OCI-LY7 (cell line): ENCODE measurements at regions of chr19 and their contacts with region 1.

Region 1: DNA sequence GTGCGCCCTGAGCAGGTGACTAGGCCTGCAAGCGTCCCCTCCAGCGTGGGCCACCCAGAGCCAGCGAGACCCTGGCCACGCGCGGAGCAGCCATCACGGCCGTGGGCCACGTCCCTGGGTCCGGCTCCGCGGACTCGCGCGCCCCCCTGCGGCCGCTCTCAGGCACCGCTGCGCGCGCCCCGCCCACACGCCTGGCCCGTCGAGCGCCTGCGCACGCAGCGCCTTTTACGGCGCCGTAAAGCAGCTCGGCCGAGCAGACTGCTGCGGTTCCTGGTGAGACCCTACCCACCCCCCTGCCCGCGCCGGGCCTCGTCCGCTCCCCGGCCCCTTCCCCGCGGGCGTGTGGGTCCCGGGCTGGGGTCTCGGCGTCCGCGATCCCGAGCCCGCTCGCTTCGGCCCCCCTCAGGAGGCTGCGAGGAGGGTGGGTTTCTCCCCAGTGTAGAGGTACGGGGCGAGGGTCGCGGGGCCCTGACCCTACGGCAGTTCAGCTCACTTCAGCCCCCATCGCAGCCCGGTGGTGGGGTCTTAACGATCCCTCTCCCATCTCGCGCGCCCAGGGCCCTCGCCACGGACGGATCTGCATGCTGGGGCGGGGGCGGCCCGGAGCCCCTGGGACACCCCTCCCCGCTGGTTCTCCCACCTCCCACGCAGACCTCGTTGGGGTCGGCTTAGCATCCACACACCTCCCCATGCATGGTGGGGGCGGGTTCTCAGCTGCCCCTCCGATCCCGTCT is at the start of gene TRAPPC5:
- DNase-seq: peak; percentile 93
- H3K4me3 ChIP-seq: peak within 1 kb of the TSS; percentile 96
- H3K27ac ChIP-seq: peak within 1 kb of the TSS; percentile 48
- H3K4me1 ChIP-seq: peaks cover 45% of the 10 kb centered on the region
- CTCF ChIP-seq: peak; percentile 87
- total RNA-seq, gene TRAPPC5: 78.4 and 91.5 TPM in 2 replicates

Region 2: GRCh38 chr19:7098701-7099596 is 581.8 kb before region 1 on chr19:
- CTCF ChIA-PET with region 1: no interaction called
- POLR2A ChIA-PET with region 1: no interaction called
- intact Hi-C with region 1: loop called (anchors 2 kb)
- DNase-seq: peak; percentile 93
- H3K4me3 ChIP-seq: peak overlapping the region; percentile 67
- H3K27ac ChIP-seq: peak overlapping the region; percentile 57
- H3K4me1 ChIP-seq: peaks cover 22% of the 10 kb centered on the region
- CTCF ChIP-seq: no peak

Region 3: DNA sequence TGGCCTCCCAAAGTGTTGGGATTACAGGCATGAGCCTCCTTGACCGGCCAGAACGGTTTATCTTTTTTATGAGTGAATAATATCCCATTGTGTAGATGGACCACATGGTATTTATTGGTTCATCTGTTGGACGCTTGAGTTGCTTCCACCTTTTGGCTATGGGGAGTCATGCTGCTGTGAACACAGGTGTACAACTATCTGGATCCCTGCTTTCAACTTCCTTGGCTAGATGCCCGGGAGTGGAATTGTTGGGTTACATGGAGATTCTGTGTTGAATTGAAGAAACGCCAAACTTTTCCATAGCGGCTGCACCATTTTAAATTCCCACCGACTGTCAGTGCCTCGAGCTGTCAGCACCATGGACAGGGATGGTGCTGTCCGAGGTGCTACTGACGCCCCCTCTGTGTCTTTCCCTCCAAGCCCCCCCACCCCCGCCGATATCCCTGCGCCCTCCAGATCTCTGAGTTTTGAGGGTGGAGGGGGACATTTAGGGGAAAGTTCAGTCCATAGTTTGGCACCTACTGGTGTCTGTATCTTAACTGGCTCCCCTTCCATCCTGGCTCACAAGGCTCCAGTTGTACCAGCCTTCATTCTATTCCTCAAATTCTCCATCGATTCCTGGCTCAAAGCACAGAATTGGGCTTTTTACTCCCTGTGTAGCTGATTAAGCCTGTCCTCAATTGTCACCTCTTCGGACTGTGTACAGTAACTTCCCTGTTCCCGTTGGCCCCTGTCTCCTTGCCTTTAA is 118.0 kb before region 1 on chr19:
- CTCF ChIA-PET with region 1: no interaction called
- POLR2A ChIA-PET with region 1: no interaction called
- intact Hi-C with region 1: loop called (anchors 1 kb)
- DNase-seq: no peak
- H3K4me3 ChIP-seq: no peak overlapping the region
- H3K27ac ChIP-seq: no peak overlapping the region
- H3K4me1 ChIP-seq: no peaks in the 10 kb centered on the region
- CTCF ChIP-seq: no peak

Region 4: GRCh38 chr19:7652061-7652641 is 28.6 kb before region 1 on chr19:
- CTCF ChIA-PET with region 1: no interaction called
- POLR2A ChIA-PET with region 1: no interaction called
- intact Hi-C with region 1: loop called (anchors 1 kb)
- DNase-seq: peak; percentile 81
- H3K4me3 ChIP-seq: peak overlapping the region; percentile 51
- H3K27ac ChIP-seq: no peak overlapping the region
- H3K4me1 ChIP-seq: peaks cover 4% of the 10 kb centered on the region
- CTCF ChIP-seq: peak; percentile 98

Region 5: GRCh38 chr19:7701654-7702457 is 21.1 kb after region 1 on chr19 and contains the start of gene FCER2:
- CTCF ChIA-PET with region 1: interaction called, 4 read pairs
- POLR2A ChIA-PET with region 1: interaction called, 6 read pairs
- intact Hi-C with region 1: loop called (anchors 2 kb)
- DNase-seq: peak; percentile 88
- H3K4me3 ChIP-seq: peak within 1 kb of the TSS; percentile 5
- H3K27ac ChIP-seq: peak within 1 kb of the TSS; percentile 90
- H3K4me1 ChIP-seq: peaks cover 68% of the 10 kb centered on the region
- CTCF ChIP-seq: no peak
- total RNA-seq, gene FCER2: 3.3 and 3.7 TPM in 2 replicates

Region 6: DNA sequence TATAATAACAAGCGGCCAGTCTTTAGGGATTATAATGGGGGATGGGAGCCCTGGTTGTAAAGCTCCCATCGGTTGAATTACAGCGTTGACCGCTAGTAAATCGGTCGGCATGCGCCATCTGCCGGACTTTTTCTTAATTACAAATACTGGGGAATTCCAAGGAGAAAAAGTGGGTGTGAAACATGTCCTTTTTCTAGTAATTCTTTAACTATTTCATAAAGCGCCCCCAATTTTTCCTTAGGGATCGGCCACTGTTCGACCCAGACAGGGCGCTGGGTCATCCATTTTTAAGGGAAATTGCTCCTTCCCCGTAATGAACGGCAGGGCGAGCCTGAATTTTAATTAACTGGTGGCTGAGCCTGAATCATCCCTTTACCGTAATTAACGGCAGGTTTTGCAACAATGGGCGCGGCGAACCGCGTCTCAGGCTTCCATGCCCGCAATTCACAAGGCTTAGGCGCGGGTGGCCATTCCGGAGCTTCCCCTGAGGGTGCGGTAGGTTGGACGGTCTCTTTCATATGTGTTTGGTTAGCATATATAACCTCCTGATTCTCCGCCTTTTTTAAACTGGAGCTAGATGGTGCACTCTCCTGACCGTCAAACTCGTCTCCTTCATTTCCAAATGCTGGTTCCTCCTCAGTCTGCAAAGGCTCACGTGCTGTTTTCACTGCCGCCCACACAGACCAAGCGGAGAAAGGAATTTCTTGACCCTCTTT is 119.0 kb after region 1 on chr19:
- CTCF ChIA-PET with region 1: no interaction called
- POLR2A ChIA-PET with region 1: no interaction called
- intact Hi-C with region 1: loop called (anchors 1 kb)
- DNase-seq: peak; percentile 76
- H3K4me3 ChIP-seq: no peak overlapping the region
- H3K27ac ChIP-seq: no peak overlapping the region
- H3K4me1 ChIP-seq: peaks cover 4% of the 10 kb centered on the region
- CTCF ChIP-seq: peak; percentile 85